ENCODE measurements at regions of chr19 and their contacts with region 1.

Region 1: GRCh38 chr19:15555759-15556633 is 47.7 kb downstream of the CYP4F22 start:
- DNase-seq: peak; percentile 97
- H3K4me3 ChIP-seq: peak overlapping the region; percentile 25 to 48 (median 38)
- H3K27ac ChIP-seq: no peak overlapping the region
- H3K4me1 ChIP-seq: peaks cover 10 to 25% (median 22%) of the 10 kb centered on the region in 4 donors
- H3K27me3 ChIP-seq: peaks cover 0 to 73% (median 6%) of the 10 kb centered on the region in 4 donors
- CTCF ChIP-seq: peak; percentile 73 to 80 (median 77)
- EP300 ChIP-seq: no peak
- POLR2A ChIP-seq: no peak

Region 2: DNA sequence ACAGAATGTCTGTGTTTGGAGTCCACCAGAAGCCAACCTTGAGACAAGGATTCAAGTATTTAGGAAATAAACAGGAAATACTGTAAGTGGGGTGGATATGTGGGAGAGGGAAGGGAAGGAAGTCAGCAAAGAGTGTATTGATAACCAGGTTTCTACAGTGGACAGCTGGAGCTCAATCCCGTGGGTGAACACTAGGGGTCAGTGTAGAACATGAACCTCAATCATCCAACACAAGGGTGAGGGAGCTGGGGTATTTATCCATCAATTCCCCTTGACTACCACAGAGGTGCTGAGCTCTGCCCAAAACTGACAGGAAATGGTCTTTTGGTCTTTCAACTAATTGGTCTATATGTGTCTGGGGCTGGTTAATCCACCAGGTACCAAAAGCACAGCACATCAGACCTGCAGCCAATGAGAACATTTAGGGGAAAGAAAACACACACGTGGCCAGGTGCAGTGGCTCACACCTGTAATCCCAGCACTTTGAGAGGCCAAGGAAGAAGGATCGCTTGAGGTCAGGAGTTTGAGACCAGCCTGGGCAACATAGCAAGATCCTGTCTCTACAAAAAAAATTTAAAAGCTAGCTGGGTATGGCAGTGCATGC is 454.4 kb before region 1 on chr19:
- intact Hi-C with region 1: loop called (anchors 5 kb)
- DNase-seq: no peak
- H3K4me3 ChIP-seq: no peak overlapping the region
- H3K27ac ChIP-seq: no peak overlapping the region
- H3K4me1 ChIP-seq: peaks cover 2 to 3% (median 2%) of the 10 kb centered on the region in 4 donors
- H3K27me3 ChIP-seq: no peaks in the 10 kb centered on the region
- CTCF ChIP-seq: peak; percentile 57 to 72 (median 59)
- EP300 ChIP-seq: no peak
- POLR2A ChIP-seq: no peak

Measured in esophagus muscularis mucosa (tissue), 4 donors.